ENCODE measurements at regions of chr15 and their contacts with region 1.

Region 1: DNA sequence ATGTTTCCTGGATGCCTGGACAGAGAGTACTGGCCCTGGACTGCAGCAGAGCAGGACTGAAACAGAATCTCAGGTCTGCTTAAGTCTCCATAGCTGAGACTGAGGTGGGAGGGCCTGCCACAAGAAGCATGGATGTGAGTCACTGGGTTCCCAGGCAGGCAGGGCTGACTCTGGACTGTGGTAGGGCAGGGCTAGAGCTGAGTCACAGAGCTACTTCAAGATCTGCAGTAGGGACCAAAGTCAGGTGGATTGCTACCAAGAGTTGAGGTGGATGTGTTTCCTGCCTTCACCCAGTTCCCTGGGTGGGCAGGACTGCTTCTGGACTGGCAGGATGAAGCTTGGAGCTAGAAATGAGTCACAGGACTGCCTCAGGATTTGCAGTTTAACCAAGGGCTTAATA is 282.9 kb downstream of the AGBL1 start:
- H3K4me3 ChIP-seq: no peak overlapping the region
- H3K27ac ChIP-seq: no peak overlapping the region
- H3K4me1 ChIP-seq: no peaks in the 10 kb centered on the region
- CTCF ChIP-seq: no peak

Region 2: GRCh38 chr15:86164232-86164898 is 198.2 kb before region 1 on chr15:
- CTCF ChIA-PET with region 1: no interaction called
- POLR2A ChIA-PET with region 1: no interaction called
- H3K4me3 ChIP-seq: no peak overlapping the region
- H3K27ac ChIP-seq: peak overlapping the region; percentile 91
- H3K4me1 ChIP-seq: peaks cover 25% of the 10 kb centered on the region
- CTCF ChIP-seq: no peak

Region 3: GRCh38 chr15:86373147-86373546 is 10.6 kb after region 1 on chr15:
- CTCF ChIA-PET with region 1: no interaction called
- POLR2A ChIA-PET with region 1: no interaction called
- H3K4me3 ChIP-seq: no peak overlapping the region
- H3K27ac ChIP-seq: no peak overlapping the region
- H3K4me1 ChIP-seq: peaks cover 22% of the 10 kb centered on the region
- CTCF ChIP-seq: no peak

Region 4: GRCh38 chr15:86383611-86384010 is 21.1 kb after region 1 on chr15:
- CTCF ChIA-PET with region 1: no interaction called
- POLR2A ChIA-PET with region 1: interaction called, 10 read pairs
- H3K4me3 ChIP-seq: no peak overlapping the region
- H3K27ac ChIP-seq: no peak overlapping the region
- H3K4me1 ChIP-seq: no peaks in the 10 kb centered on the region; the same call in 1 of the 2 replicates
- CTCF ChIP-seq: no peak

Region 5: GRCh38 chr15:86413191-86413590 is 50.6 kb after region 1 on chr15:
- CTCF ChIA-PET with region 1: no interaction called
- POLR2A ChIA-PET with region 1: no interaction called
- H3K4me3 ChIP-seq: no peak overlapping the region
- H3K27ac ChIP-seq: no peak overlapping the region
- H3K4me1 ChIP-seq: no peaks in the 10 kb centered on the region
- CTCF ChIP-seq: no peak